Endothelial cell of umbilical vein (primary cell): ENCODE measurements at regions of chr1 and their contacts with region 1.

Region 1: DNA sequence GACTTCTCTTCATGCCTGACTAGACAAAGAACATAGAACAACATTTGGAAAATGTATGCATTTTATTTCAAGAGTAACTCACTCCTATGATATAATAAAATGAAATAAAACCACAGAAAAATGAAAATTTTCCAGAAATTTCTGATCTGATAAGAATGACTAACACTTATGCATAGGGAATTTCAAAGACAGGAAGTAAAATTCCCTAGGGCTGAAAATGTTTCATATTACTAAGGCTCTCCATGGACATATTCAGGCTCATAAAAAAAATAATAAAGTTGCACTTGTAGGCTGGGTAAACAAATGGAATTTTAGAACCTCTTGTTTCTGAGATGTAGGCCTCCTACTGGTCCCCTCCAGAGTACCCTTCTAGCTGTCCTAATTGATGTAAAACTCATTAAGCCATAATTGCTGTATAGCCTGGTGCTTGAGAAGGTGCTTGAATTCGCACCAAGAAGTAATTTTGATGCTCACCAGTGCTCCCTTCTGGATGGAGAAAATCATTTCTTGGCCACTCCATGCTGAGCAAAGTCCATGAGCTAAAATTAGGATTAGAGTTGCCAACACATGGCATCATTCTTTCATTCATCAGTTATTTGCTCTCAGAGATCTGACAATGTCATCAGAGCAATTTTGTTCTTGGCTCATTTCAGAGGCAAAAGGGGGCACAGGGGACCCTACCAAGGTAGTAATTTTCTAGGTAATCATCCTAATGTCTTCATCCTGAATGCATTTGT is 641.0 kb upstream of the CAMK1G start:
- DNase-seq: peak; percentile 53
- H3K4me3 ChIP-seq: no peak overlapping the region
- H3K27ac ChIP-seq: no peak overlapping the region
- H3K4me1 ChIP-seq: peaks cover 32% of the 10 kb centered on the region
- H3K27me3 ChIP-seq: no peaks in the 10 kb centered on the region
- CTCF ChIP-seq: no peak
- POLR2A ChIP-seq: no peak

Region 2: GRCh38 chr1:208874915-208875314 is 67.6 kb before region 1 on chr1:
- CTCF ChIA-PET with region 1: no interaction called
- POLR2A ChIA-PET with region 1: no interaction called
- dilution Hi-C with region 1: no loop called
- intact Hi-C with region 1: no loop called
- DNase-seq: no peak
- H3K4me3 ChIP-seq: no peak overlapping the region
- H3K27ac ChIP-seq: no peak overlapping the region
- H3K4me1 ChIP-seq: no peaks in the 10 kb centered on the region
- H3K27me3 ChIP-seq: no peaks in the 10 kb centered on the region
- CTCF ChIP-seq: no peak
- POLR2A ChIP-seq: no peak

Region 3: DNA sequence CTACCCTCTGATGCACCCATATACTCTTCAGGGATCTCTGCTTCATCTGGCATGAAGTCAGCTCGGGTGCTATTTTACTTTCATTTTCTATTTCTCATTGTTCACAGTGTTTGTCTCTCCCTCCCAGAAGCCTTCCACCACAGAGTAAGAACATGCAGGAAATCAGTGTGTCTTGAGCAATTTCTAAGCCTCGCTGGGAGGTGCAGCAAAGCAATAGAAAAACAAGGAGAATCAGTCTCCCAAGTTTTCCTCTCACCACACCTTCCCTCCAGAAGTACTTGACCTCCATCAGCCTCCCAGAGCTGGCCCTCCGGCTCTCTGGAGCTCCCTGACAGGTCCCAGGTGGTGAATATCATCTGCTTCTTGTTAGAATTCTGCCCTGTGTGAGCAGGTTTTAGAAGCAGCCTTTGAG is 46.3 kb after region 1 on chr1:
- CTCF ChIA-PET with region 1: no interaction called
- POLR2A ChIA-PET with region 1: no interaction called
- dilution Hi-C with region 1: no loop called
- intact Hi-C with region 1: loop called (anchors 1 kb)
- DNase-seq: peak; percentile 76
- H3K4me3 ChIP-seq: peak overlapping the region; percentile 1 to 68 (median 55)
- H3K27ac ChIP-seq: peak overlapping the region; percentile 57
- H3K4me1 ChIP-seq: peaks cover 25% of the 10 kb centered on the region
- H3K27me3 ChIP-seq: no peaks in the 10 kb centered on the region
- CTCF ChIP-seq: no peak
- POLR2A ChIP-seq: no peak

Region 4: DNA sequence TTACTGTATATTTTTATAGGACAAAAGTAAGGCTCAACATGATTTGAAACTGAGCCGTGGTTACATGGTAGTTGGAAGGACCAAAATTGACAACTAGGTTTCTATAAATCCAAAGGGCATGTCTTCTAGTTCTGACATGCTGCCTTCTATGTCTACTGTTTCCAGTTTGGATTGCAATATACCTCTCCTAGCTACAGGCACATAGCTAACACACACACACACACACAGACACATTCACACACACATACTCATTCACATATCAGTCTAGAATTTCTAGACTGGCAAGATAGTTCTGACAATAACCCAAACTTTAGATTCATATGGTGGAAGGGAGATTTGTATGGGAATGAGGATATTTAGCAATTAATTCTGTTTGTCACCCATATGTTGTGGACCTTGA is 96.2 kb after region 1 on chr1:
- CTCF ChIA-PET with region 1: no interaction called
- POLR2A ChIA-PET with region 1: no interaction called
- dilution Hi-C with region 1: no loop called
- intact Hi-C with region 1: loop called (anchors 2 kb)
- DNase-seq: no peak
- H3K4me3 ChIP-seq: no peak overlapping the region
- H3K27ac ChIP-seq: no peak overlapping the region
- H3K4me1 ChIP-seq: peaks cover 7% of the 10 kb centered on the region
- H3K27me3 ChIP-seq: peaks cover 34 to 44% of the 10 kb centered on the region in 2 experiments
- CTCF ChIP-seq: no peak
- POLR2A ChIP-seq: no peak

Region 5: DNA sequence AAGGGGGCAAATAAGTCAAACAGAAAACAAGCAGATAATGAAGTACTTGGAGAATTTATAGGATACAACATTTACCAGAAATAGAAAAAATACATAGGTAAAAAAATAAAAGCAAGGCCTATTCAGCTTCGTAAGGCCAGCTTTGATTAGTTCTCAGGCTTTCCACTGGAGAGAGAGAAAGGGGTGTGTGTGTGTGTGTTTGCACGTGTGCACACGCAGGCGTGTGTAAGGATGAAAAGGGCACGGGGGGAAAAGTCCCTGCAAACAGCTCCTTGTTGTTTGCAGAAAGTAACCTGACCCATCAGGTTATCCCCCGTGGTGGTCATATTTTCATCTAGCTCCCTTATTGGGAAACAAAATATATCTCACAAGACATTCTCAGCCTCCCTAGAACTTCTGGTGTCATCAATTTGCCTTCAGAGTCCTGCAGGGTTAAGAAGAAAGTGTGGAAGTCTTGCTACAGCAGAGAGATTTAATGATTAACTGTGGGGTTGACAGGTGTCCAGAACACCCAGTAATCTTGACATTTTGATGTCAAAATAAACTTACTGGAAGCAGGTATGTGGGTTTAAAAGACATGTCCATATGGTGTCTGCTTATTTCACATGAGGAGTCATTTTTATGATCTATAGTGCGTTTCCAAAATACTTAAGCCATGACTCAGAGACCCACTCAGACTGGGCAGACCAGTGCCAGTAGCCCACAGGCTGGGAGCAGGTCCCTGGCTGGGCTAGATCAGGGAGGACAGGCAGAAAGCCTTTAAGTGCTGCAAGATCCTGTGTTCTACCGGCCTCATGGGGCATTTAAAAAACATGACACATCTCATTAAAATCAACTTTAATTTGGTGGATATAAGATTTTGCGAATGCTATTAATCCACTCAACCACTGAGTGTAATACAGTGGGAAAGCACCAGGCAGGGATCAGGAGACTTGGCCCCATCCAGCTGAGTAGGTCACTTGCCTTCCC is 153.3 kb after region 1 on chr1:
- CTCF ChIA-PET with region 1: no interaction called
- POLR2A ChIA-PET with region 1: no interaction called
- dilution Hi-C with region 1: no loop called
- intact Hi-C with region 1: no loop called
- DNase-seq: no peak
- H3K4me3 ChIP-seq: no peak overlapping the region
- H3K27ac ChIP-seq: no peak overlapping the region
- H3K4me1 ChIP-seq: no peaks in the 10 kb centered on the region
- H3K27me3 ChIP-seq: no peaks in the 10 kb centered on the region
- CTCF ChIP-seq: no peak
- POLR2A ChIP-seq: no peak